KBM-7 (cell line): ENCODE measurements at regions of chr1 and their contacts with region 1.

Region 1: GRCh38 chr1:27392096-27392777 is at the start of gene GPR3:
- DNase-seq: peak; percentile 93

Region 2: GRCh38 chr1:27111626-27112573 is 280.3 kb before region 1 on chr1:
- in situ Hi-C with region 1: loop called (anchors 25 kb)
- DNase-seq: peak; percentile 98